Heart left ventricle (tissue), 16 donors: ENCODE measurements at regions of chr14 and their contacts with region 1.

Region 1: GRCh38 chr14:39114073-39114838 is at the start of gene GEMIN2:
- DNase-seq: peak; percentile 90 to 95 (median 93)
- ATAC-seq: peak; percentile 99 to 100 (median 100)
- H3K4me3 ChIP-seq: peak within 1 kb of the TSS; percentile 47 to 92 (median 78)
- H3K27ac ChIP-seq: peak within 1 kb of the TSS; percentile 29 to 84 (median 76)
- H3K4me1 ChIP-seq: peaks cover 0 to 13% (median 10%) of the 10 kb centered on the region in 12 donors
- H3K27me3 ChIP-seq: no peaks in the 10 kb centered on the region
- CTCF ChIP-seq: no peak
- POLR2A ChIP-seq: peak in 1 of 2 donors; percentile 52
- total RNA-seq, gene GEMIN2: 6.3 to 17.8 (median 7.4) TPM

Region 2: DNA sequence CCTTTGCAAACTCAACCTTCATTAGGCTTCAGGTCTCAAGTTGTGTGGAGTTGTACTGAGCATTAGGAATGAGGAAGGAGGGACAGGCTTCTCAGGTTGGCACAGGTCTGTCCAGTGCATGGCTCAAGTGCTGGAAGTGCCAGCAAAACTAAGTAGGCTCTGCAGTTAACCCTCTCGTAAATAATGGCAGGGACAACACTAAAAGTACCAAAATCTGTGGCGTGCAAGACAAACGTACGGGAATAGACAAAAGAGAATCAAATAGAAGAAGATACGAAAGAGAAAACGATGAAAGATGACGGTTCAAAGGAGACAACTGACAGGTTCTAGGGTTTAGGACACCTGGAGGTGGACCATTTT is 55.3 kb after region 1 on chr14:
- intact Hi-C with region 1: loop called in 5 of 10 experiments (anchors 5 to 10 kb)
- DNase-seq: no peak
- ATAC-seq: peak in 3 of 4 donors; percentile 23 to 60 (median 35)
- H3K4me3 ChIP-seq: peak overlapping the region; percentile 69 to 88 (median 82)
- H3K27ac ChIP-seq: peak overlapping the region; percentile 89 to 99 (median 98)
- H3K4me1 ChIP-seq: peaks cover 0 to 45% (median 27%) of the 10 kb centered on the region in 12 donors
- H3K27me3 ChIP-seq: no peaks in the 10 kb centered on the region
- CTCF ChIP-seq: no peak
- POLR2A ChIP-seq: no peak

Region 3: DNA sequence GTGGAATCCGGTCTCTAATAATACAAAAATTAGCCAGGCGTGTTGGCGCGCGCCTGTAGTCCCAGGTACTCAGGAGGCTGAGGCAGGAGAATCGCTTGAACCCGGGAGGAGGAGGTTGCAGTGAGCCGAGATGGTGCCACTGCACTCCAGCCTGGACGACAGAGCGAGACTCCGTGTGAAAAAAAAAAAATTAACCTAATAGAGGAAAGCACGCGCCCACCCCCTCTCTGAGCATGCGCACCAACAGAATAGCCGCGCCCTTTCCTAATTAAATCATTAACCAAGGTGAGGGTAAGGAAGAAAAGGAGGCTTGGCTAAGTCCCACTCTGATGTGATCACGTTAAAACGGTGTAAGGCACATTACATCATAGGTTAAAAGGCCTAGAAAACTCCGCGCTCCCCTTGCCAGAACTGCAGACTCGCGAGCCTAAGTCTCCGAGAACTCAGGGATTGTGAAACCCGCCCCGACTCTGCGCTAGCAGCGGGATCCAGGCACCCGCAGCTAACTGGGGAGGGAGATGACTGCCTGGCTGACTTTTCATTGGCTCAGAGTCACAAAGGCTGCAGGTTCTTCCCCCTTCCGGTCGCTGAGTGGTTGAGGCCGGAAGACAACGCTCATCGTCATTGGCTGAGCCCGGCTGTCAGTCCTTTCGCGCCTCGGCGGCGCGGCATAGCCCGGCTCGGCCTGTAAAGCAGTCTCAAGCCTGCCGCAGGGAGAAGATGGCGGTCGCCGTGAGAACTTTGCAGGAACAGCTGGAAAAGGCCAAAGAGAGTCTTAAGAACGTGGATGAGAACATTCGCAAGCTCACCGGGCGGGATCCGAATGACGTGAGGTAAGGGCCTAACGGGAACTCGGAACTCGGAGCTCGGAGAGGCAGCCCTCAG is 60.5 kb after region 1 on chr14 and contains the start of gene PNN:
- intact Hi-C with region 1: loop called in 4 of 10 experiments (anchors 5 to 10 kb)
- DNase-seq: peak; percentile 97 to 99 (median 97)
- ATAC-seq: peak; percentile 96 to 98 (median 96)
- H3K4me3 ChIP-seq: peak within 1 kb of the TSS; percentile 39 to 97 (median 80)
- H3K27ac ChIP-seq: peak within 1 kb of the TSS; percentile 77 to 95 (median 93)
- H3K4me1 ChIP-seq: peaks cover 0 to 31% (median 23%) of the 10 kb centered on the region in 12 donors
- H3K27me3 ChIP-seq: no peaks in the 10 kb centered on the region
- CTCF ChIP-seq: no peak
- POLR2A ChIP-seq: peak; percentile 46 to 93
- total RNA-seq, gene PNN: 6.9 to 26.7 (median 21.0) TPM

Region 4: GRCh38 chr14:39368261-39368959 is 254.2 kb after region 1 on chr14:
- intact Hi-C with region 1: loop called in 5 of 10 experiments (anchors 5 to 10 kb)
- DNase-seq: peak in 4 of 5 donors; percentile 26 to 50 (median 38)
- ATAC-seq: peak; percentile 70 to 84 (median 80)
- H3K4me3 ChIP-seq: no peak overlapping the region
- H3K27ac ChIP-seq: no peak overlapping the region
- H3K4me1 ChIP-seq: peaks cover 0 to 18% (median 0%) of the 10 kb centered on the region in 12 donors
- H3K27me3 ChIP-seq: no peaks in the 10 kb centered on the region
- CTCF ChIP-seq: peak in 11 of 12 donors; percentile 5 to 67 (median 50)
- POLR2A ChIP-seq: no peak